Activated naive CD4-positive, alpha-beta T cell treated with anti-CD3 and anti-CD28 coated beads for 36 hours (primary cell): ENCODE measurements at regions of chr10 and their contacts with region 1.

Region 1: DNA sequence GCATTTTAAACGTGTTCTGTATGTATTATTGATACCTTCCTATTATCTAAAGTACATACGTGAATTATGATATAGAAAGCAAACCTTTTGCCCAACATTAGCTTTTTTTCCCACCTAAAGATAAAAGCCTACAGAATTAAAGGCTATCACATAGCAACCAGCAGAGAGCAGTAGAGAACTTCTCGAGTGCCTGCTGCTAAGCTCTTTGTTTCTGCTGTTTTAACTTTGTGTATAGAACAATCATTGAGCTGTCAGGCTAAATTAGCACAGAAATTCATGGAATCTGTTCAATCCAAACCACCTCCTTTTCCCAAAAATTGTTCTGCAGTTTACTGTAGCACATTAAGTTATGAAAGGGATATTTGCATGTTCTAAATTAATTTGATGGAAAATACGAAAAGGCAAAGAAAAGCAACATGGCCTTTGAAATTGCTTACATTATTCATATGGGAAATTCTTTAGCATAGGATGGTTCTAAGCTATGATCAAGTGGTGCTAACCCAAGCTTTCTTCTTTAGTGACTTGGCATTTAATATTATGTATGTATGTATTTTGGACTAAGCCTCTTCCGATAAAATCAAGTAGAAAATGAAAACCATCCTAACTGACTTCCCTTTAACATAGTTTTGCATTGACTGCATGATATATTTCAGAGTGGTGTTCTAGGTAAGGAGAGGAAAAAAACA is 1288.5 kb downstream of the GATA3 start:
- DNase-seq: no peak
- H3K4me3 Mint-ChIP-seq: no peak overlapping the region
- H3K27ac Mint-ChIP-seq: no peak overlapping the region
- H3K4me1 Mint-ChIP-seq: peaks cover 11% of the 10 kb centered on the region
- H3K27me3 Mint-ChIP-seq: no peaks in the 10 kb centered on the region

Region 2: GRCh38 chr10:9416331-9416730 is 73.3 kb after region 1 on chr10:
- CTCF ChIA-PET with region 1: no interaction called
- intact Hi-C with region 1: no loop called
- DNase-seq: no peak
- H3K4me3 Mint-ChIP-seq: no peak overlapping the region
- H3K27ac Mint-ChIP-seq: no peak overlapping the region
- H3K4me1 Mint-ChIP-seq: no peaks in the 10 kb centered on the region
- H3K27me3 Mint-ChIP-seq: peaks cover 3% of the 10 kb centered on the region

Region 3: DNA sequence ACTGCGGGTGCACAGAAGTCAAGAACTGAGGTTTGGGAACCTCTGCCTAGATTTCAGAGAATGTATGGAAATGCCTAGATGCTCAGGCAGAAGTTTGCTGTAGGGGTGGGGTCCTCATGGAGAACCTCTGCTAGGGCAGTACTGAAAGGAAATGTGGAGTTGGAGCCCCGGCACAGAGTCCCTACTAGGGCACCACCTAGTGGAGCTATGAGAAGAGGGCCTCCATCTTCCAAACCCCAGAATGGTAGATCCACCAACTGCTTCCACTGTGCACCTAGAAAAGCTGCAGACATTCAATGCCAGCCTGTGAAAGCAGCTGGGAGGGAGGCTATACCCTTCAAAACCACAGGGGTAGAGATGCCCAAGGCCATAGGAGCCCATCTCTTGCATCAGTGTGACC is 338.6 kb after region 1 on chr10:
- CTCF ChIA-PET with region 1: no interaction called
- intact Hi-C with region 1: loop called (anchors 5 kb)
- DNase-seq: no peak
- H3K4me3 Mint-ChIP-seq: no peak overlapping the region
- H3K27ac Mint-ChIP-seq: no peak overlapping the region
- H3K4me1 Mint-ChIP-seq: no peaks in the 10 kb centered on the region
- H3K27me3 Mint-ChIP-seq: peaks cover 7% of the 10 kb centered on the region

Region 4: DNA sequence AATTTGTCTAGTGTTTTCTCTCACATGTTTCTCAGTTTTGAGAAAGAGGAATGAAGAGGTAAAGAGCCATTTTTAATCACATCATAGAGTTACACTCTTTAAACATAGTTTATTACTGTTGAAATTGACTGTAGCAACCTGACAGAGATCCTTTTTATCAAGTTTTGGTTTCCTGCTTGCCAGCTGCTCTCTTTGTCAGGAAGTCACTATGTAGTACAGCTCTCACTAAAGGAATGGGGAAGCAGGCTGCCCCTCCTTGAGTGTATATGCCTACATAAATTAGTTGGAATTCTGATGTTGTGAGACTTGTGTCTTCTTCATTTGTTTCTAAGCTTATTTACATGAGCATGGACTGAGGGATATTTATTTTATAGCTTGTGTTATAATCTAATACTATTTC is 400.6 kb after region 1 on chr10:
- CTCF ChIA-PET with region 1: no interaction called
- intact Hi-C with region 1: loop called (anchors 5 kb)
- DNase-seq: no peak
- H3K4me3 Mint-ChIP-seq: no peak overlapping the region
- H3K27ac Mint-ChIP-seq: no peak overlapping the region
- H3K4me1 Mint-ChIP-seq: no peaks in the 10 kb centered on the region
- H3K27me3 Mint-ChIP-seq: peaks cover 14% of the 10 kb centered on the region

Region 5: GRCh38 chr10:10020945-10021344 is 677.9 kb after region 1 on chr10:
- CTCF ChIA-PET with region 1: no interaction called
- intact Hi-C with region 1: no loop called
- DNase-seq: no peak
- H3K4me3 Mint-ChIP-seq: no peak overlapping the region
- H3K27ac Mint-ChIP-seq: no peak overlapping the region
- H3K4me1 Mint-ChIP-seq: no peaks in the 10 kb centered on the region
- H3K27me3 Mint-ChIP-seq: peaks cover 13% of the 10 kb centered on the region

Region 6: DNA sequence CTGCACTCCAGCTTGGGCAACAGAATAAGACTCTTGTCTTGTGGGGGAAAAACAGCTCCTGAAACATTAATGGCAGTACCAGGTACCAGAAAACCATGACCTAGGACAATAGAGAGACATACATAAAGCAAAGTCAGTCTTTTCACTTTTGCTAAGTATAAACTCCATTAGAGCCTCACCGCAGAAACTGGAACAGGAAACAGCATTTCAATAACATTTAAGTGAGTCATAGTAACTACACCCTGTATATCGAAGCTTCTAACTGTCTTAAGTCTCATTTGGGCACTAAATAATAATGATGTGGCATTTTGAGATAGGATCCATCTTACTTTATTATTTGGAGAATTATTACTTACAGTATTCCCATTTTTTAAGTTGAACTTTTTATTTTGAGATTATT is 1156.8 kb after region 1 on chr10:
- CTCF ChIA-PET with region 1: no interaction called
- intact Hi-C with region 1: loop called (anchors 10 kb)
- DNase-seq: no peak
- H3K4me3 Mint-ChIP-seq: no peak overlapping the region
- H3K27ac Mint-ChIP-seq: no peak overlapping the region
- H3K4me1 Mint-ChIP-seq: no peaks in the 10 kb centered on the region
- H3K27me3 Mint-ChIP-seq: peaks cover 20% of the 10 kb centered on the region